Right ventricle myocardium inferior (tissue), 1 donor: ENCODE measurements at regions of chr6 and their contacts with region 1.

Region 1: DNA sequence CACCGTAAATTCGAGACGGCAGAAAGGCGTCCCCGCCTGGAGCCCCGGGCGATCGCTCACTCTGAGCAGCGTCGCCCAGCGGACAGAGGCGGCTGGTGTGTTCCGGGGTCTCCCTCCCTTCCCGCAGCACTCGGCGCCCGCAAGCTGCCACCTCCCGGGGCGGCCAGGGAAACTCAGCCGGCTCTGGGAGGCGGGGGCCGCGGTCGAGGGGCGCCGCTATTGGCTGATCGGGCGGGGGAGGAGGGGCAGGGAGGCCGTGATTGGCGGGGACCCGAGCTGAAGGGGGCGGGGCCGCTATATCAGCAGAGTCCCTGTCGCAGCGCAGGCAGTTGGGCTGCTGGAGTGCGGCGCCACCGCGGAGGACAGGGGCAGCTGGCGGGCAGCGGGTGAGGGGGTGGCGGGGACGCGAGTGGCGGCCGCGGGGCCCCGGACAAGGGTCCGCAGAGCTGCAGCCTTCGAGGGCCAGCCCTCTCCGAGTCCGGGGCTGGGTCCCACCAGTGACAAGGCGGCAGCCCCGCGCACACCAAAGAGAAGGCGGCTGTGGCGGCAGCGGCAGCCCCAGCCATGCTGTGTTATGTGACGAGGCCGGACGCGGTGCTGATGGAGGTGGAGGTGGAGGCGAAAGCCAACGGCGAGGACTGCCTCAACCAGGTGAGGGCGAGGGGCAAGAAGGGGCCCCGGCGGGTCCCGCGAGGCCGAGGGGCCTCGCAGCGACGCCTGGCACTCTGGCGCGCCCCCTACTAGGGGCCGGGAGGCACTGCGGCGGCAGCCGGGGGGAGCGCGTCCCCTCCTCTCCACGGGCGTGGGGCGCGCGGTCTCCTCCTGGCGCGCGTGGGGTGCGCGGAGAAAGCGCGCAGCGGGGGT is at the start of gene MYLIP:
- DNase-seq: peak; percentile 98
- ATAC-seq: peak; percentile 98
- total RNA-seq, gene MYLIP: 13.0 TPM

Region 2: DNA sequence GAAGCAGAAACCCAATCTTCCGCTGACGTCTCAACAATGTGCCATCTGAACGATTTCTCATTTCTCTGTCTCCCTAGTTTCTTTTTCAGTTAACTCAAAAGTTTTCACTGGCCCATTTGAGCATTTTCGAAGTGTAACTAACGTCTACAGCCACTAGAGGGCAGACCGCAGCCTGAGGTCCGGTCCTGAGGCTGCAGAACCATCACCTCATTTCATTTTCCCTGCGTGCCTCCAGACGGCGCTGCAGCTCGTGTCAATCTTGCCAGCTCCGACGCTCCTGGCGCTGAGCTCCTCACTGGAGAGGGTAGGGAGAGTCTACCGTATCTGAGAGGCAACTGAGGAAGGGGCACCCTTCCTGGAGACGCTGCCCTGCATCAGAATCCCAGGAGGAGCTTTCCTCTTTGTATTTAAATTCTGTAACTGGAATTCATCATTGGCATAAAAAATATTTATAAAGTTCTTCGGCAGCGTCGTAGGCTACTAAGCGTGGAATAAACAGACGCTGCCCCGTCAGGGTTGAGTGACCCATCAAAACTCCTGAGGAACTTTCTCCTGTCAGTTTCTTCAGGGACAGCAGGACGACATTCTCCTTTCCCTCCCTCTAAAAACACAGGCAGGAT is 437.6 kb before region 1 on chr6:
- intact Hi-C with region 1: loop called (anchors 1 kb)
- DNase-seq: peak; percentile 88
- ATAC-seq: peak; percentile 94

Region 3: GRCh38 chr6:15879382-15880261 is 249.4 kb before region 1 on chr6:
- intact Hi-C with region 1: loop called (anchors 5 kb)
- DNase-seq: peak; percentile 90
- ATAC-seq: peak; percentile 73

Region 4: GRCh38 chr6:15901141-15902115 is 227.6 kb before region 1 on chr6:
- intact Hi-C with region 1: no loop called
- DNase-seq: peak; percentile 75
- ATAC-seq: no peak

Region 5: DNA sequence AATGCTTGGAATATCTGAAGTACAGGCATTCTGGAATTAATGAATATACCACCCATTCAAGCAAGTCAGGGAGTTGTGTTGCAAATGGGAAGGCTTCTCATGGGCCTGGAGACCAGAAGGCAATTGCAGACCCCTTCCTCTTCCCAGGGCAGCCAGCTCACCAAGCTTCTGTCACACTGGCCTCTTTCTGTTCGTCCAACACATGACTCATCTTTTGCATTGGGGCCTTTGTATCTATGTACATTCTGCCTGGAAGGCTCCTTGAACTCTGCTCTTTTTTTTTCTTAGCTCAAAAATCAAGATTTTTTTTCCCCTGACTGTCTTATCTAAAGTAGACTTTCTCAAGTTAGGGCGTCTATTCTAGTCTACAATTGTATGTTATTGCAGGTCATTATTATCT is 133.0 kb before region 1 on chr6:
- intact Hi-C with region 1: loop called (anchors 5 kb)
- DNase-seq: no peak
- ATAC-seq: no peak

Region 6: DNA sequence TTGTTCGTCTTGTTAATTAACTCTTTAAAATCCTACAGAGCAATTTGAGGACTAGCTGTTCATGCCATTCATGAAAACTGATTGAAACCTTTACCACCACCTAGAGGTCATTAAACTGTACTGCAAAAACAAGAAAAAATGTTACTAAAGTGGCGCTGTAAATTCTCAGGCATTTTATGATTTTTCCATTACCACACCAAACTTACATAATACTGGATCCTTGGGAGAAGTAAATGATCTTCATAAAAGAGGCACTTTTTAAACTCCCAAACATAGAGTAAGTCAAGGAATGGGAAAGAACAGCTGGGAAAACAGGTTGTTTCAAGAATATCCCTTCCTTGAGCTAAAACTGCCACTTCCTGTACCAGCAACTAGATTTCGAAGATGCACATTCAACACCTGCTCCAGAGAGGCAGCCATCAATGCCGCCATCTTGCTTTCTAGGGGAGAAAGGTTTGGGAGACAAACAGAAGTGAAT is 54.2 kb after region 1 on chr6:
- intact Hi-C with region 1: loop called (anchors 2 kb)
- DNase-seq: no peak
- ATAC-seq: no peak